ENCODE measurements at regions of chr14 and their contacts with region 1.

Region 1: GRCh38 chr14:72476657-72477499 is 417.0 kb downstream of the DPF3 start:
- DNase-seq: peak in 7 of 9 donors; percentile 20 to 75 (median 31)
- ATAC-seq: peak; percentile 85
- H3K4me3 ChIP-seq: peak overlapping the region; percentile 25
- H3K4me3 Mint-ChIP-seq: peak overlapping the region; percentile 34 to 83 (median 72)
- H3K27ac ChIP-seq: peak overlapping the region; percentile 4
- H3K27ac Mint-ChIP-seq: peak overlapping the region; percentile 15 to 93 (median 60)
- H3K4me1 ChIP-seq: peaks cover 10 to 21% of the 10 kb centered on the region in 2 donors
- H3K4me1 Mint-ChIP-seq: peaks cover 24 to 82% (median 45%) of the 10 kb centered on the region in 7 donors
- H3K27me3 ChIP-seq: no peaks in the 10 kb centered on the region
- H3K27me3 Mint-ChIP-seq: peaks cover 0 to 3% (median 0%) of the 10 kb centered on the region in 5 donors

Region 2: DNA sequence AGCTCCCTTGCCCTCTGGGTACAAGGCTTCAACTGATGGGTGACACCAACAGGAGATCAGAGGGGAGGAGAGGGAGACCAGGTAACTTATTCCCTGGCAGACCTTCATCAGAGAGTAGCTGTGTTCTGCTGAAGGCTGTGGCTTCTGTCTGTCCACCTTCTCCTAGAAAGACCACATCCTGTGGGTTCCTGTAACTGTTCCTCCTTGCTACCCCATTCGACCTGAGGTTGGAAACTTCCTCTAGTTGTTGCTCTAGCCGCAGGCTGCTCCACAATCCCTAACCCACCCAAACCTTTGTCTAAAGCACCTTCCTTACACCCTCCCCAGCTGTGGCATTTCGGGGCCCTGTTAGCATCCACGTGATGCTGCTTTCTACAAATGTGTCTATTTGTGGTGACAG is 37.2 kb before region 1 on chr14:
- CTCF ChIA-PET with region 1: no interaction called
- POLR2A ChIA-PET with region 1: no interaction called
- intact Hi-C with region 1: loop called in 1 of 2 experiments (anchors 1 kb)
- DNase-seq: peak in 1 of 9 donors; percentile 44
- ATAC-seq: peak; percentile 33
- H3K4me3 ChIP-seq: no peak overlapping the region
- H3K4me3 Mint-ChIP-seq: peak overlapping the region in 7 of 10 donors; percentile 12 to 83 (median 36)
- H3K27ac ChIP-seq: no peak overlapping the region
- H3K27ac Mint-ChIP-seq: peak overlapping the region in 8 of 9 donors; percentile 9 to 83 (median 42)
- H3K4me1 ChIP-seq: peaks cover 16 to 26% of the 10 kb centered on the region in 2 donors
- H3K4me1 Mint-ChIP-seq: peaks cover 38 to 93% (median 50%) of the 10 kb centered on the region in 7 donors
- H3K27me3 ChIP-seq: no peaks in the 10 kb centered on the region
- H3K27me3 Mint-ChIP-seq: peaks cover 0 to 5% (median 0%) of the 10 kb centered on the region in 5 donors

Region 3: DNA sequence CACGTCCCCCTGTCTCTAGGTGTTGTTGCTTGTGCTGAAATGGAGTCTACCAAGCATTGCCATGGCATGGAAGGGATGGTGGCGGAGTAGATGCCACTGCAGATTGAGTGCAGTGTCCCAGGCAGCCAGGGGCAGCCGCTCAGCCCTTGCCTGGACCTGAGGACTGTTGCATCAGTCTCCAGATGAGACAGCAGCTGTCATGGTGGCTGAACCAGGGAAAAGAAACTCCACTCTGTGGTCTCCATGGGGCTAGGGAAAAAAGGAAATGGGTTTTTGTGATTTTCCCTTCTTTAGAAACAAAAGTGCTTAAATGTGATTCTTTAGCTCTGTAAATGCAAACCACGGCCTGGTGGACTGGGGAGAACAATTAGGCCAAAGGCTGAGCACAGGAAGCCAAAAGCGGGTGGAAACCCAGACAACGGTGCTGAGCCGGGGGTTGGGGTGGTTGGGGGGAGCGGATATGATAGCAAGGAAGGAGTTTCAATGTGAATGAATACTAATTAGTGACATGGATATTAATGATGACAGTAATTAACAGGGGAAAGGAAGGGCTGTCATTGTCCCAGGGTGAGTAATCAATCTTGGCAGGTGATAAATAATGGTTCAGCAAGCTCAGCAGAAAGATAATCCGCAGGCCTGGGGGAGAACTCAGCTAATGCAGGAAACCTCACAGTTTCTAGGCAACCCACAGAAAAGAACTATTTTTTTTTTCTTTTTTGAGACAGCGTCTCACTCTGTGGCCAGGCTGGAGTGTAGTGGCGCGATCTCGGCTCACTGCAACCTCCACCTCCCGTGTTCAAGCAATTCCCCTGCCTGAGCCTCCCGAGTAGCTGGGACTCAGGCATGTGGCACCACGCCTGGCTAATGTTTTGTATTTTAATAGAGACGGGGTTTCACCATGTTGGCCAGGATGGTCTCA is 25.6 kb before region 1 on chr14:
- CTCF ChIA-PET with region 1: no interaction called
- POLR2A ChIA-PET with region 1: no interaction called
- intact Hi-C with region 1: loop called in 1 of 2 experiments (anchors 1 kb)
- DNase-seq: peak in 4 of 9 donors; percentile 6 to 30 (median 15)
- ATAC-seq: peak; percentile 80
- H3K4me3 ChIP-seq: peak overlapping the region; percentile 15
- H3K4me3 Mint-ChIP-seq: peak overlapping the region; percentile 25 to 82 (median 76)
- H3K27ac ChIP-seq: no peak overlapping the region
- H3K27ac Mint-ChIP-seq: peak overlapping the region in 8 of 9 donors; percentile 3 to 93 (median 68)
- H3K4me1 ChIP-seq: peaks cover 15 to 17% of the 10 kb centered on the region in 2 donors
- H3K4me1 Mint-ChIP-seq: peaks cover 21 to 71% (median 26%) of the 10 kb centered on the region in 7 donors
- H3K27me3 ChIP-seq: no peaks in the 10 kb centered on the region
- H3K27me3 Mint-ChIP-seq: peaks cover 0 to 4% (median 0%) of the 10 kb centered on the region in 5 donors

Region 4: DNA sequence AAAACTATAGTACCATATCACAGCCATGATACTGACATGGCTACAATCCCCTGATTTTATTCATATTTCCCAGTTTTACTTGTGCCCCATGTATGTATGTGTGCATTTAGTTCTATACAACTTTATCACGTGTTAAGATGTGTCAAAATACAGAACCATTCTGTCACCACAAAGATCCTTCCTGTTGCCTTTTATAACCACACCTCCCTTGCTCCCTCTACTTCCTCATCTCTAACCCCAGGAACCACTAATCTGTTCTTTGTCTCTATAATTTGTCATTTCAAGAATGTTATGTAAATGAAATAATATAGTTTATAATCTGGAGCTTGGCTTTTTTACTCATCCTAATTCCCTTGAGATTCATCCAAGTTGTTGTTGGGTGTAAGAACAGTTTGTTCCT is 58.6 kb after region 1 on chr14:
- CTCF ChIA-PET with region 1: no interaction called
- POLR2A ChIA-PET with region 1: no interaction called
- intact Hi-C with region 1: loop called in 1 of 2 experiments (anchors 2 kb)
- DNase-seq: peak in 4 of 9 donors; percentile 26 to 45 (median 34)
- ATAC-seq: peak; percentile 78
- H3K4me3 ChIP-seq: no peak overlapping the region
- H3K4me3 Mint-ChIP-seq: peak overlapping the region in 9 of 10 donors; percentile 8 to 69 (median 55)
- H3K27ac ChIP-seq: no peak overlapping the region
- H3K27ac Mint-ChIP-seq: peak overlapping the region in 5 of 9 donors; percentile 1 to 35 (median 32)
- H3K4me1 ChIP-seq: peaks cover 43 to 47% of the 10 kb centered on the region in 2 donors
- H3K4me1 Mint-ChIP-seq: peaks cover 43 to 75% (median 64%) of the 10 kb centered on the region in 7 donors
- H3K27me3 ChIP-seq: no peaks in the 10 kb centered on the region
- H3K27me3 Mint-ChIP-seq: peaks cover 0 to 23% (median 0%) of the 10 kb centered on the region in 5 donors

Region 5: GRCh38 chr14:72893636-72894321 is 416.9 kb after region 1 on chr14 and contains the start of gene DPF3:
- CTCF ChIA-PET with region 1: no interaction called
- POLR2A ChIA-PET with region 1: no interaction called
- intact Hi-C with region 1: loop called in 1 of 2 experiments (anchors 5 kb)
- DNase-seq: peak; percentile 80 to 91 (median 86)
- ATAC-seq: peak; percentile 99
- H3K4me3 ChIP-seq: peak within 1 kb of the TSS; percentile 74
- H3K4me3 Mint-ChIP-seq: peak within 1 kb of the TSS; percentile 91 to 99 (median 97)
- H3K27ac ChIP-seq: peak within 1 kb of the TSS; percentile 51
- H3K27ac Mint-ChIP-seq: peak within 1 kb of the TSS; percentile 22 to 94 (median 56)
- H3K4me1 ChIP-seq: peaks cover 9 to 20% of the 10 kb centered on the region in 2 donors
- H3K4me1 Mint-ChIP-seq: peaks cover 20 to 36% (median 24%) of the 10 kb centered on the region in 7 donors
- H3K27me3 ChIP-seq: peaks cover 6 to 10% of the 10 kb centered on the region in 2 donors
- H3K27me3 Mint-ChIP-seq: peaks cover 37 to 72% (median 53%) of the 10 kb centered on the region in 5 donors
- total RNA-seq, gene DPF3: 0.24 to 5.5 (median 0.61) TPM in 4 of 5 experiments, not detected in the other